PC-3 (cell line): ENCODE measurements at regions of chr15 and their contacts with region 1.

Region 1: DNA sequence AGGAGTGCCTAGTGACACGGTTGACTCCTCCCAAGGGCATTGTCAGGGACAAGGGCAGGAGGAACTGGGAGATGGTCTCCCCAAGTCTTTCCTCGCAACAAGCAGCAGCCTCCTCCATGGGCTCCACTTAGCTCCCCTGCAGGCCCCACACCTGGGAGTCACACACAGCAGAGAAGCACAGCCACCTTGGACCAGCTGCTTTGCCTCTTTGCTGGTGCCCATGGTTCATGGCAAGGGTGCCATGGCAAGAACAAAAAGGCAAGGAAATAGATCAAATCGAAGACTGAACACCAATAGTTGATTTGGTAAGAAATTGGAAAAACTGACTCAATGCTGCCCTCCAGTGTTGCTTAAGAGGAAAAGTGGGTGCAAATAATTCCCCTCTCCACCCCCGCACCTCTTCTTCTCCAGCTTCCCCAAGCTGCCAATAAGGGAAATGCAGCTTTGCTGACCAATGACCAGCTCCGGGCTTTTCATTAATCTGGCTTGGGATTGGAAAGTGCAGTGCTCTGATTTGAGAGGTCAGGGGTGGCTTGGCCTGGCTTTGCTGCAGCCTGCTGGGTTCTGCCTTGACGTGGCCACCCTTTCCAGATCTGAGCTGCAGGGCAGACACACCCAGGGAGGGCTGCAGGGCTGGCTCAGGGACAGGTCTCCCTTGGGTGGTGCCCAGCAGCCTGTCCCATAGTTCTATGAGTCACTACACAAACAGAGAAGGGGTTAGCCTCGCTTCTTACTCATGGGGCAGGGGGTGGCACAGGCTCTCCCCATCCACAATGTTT is 162.0 kb downstream of the KLF13 start:
- DNase-seq: peak; percentile 83
- ATAC-seq: peak; percentile 91
- H3K4me3 ChIP-seq: no peak overlapping the region
- H3K27ac ChIP-seq: peak overlapping the region; percentile 67
- H3K4me1 ChIP-seq: peaks cover 24% of the 10 kb centered on the region
- H3K27me3 ChIP-seq: no peaks in the 10 kb centered on the region
- CTCF ChIP-seq: peak; percentile 93

Region 2: DNA sequence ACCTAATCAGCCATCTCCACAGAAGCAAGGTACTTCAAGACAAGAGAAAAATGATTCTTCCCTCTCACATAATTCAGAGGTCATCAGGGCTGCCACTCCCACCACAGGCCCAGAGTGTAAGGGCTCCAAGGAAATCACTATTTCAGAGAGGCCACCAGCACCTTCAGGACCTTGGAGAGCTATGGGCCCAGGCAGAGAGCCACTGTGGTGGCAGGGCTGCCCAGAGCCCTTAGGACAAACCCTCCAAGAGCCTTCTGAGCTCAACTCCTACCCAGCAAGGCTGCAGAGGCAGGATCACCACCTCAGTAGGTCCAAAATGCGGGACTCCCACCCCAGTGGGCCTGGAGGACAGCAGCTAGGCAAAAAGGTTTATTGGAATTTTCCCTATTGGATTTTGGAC is 602.8 kb before region 1 on chr15:
- CTCF ChIA-PET with region 1: no interaction called
- POLR2A ChIA-PET with region 1: no interaction called
- intact Hi-C with region 1: loop called (anchors 5 kb)
- DNase-seq: peak; percentile 48
- ATAC-seq: 0 out of 2 replicates have a peak, but pooled peaks have one; percentile 37
- H3K4me3 ChIP-seq: no peak overlapping the region
- H3K27ac ChIP-seq: no peak overlapping the region
- H3K4me1 ChIP-seq: no peaks in the 10 kb centered on the region
- H3K27me3 ChIP-seq: no peaks in the 10 kb centered on the region
- CTCF ChIP-seq: no peak

Region 3: GRCh38 chr15:31200735-31201151 is 287.9 kb before region 1 on chr15:
- CTCF ChIA-PET with region 1: interaction called, 10 read pairs
- POLR2A ChIA-PET with region 1: no interaction called
- intact Hi-C with region 1: loop called (anchors 1 kb)
- DNase-seq: peak; percentile 66
- ATAC-seq: peak; percentile 90
- H3K4me3 ChIP-seq: no peak overlapping the region
- H3K27ac ChIP-seq: no peak overlapping the region
- H3K4me1 ChIP-seq: no peaks in the 10 kb centered on the region
- H3K27me3 ChIP-seq: peaks cover 26% of the 10 kb centered on the region
- CTCF ChIP-seq: peak; percentile 56

Region 4: GRCh38 chr15:31215490-31216214 is 273.0 kb before region 1 on chr15:
- CTCF ChIA-PET with region 1: interaction called, 3 read pairs
- POLR2A ChIA-PET with region 1: no interaction called
- intact Hi-C with region 1: loop called (anchors 1 kb)
- DNase-seq: peak; percentile 62
- ATAC-seq: peak; percentile 79
- H3K4me3 ChIP-seq: peak overlapping the region; percentile 67
- H3K27ac ChIP-seq: no peak overlapping the region
- H3K4me1 ChIP-seq: peaks cover 11% of the 10 kb centered on the region; the same call in 1 of the 2 replicates
- H3K27me3 ChIP-seq: no peaks in the 10 kb centered on the region
- CTCF ChIP-seq: peak; percentile 75

Region 5: GRCh38 chr15:31387479-31388118 is 101.0 kb before region 1 on chr15:
- CTCF ChIA-PET with region 1: no interaction called
- POLR2A ChIA-PET with region 1: no interaction called
- intact Hi-C with region 1: loop called (anchors 2 kb)
- DNase-seq: peak; percentile 70
- ATAC-seq: peak; percentile 74
- H3K4me3 ChIP-seq: no peak overlapping the region
- H3K27ac ChIP-seq: peak overlapping the region; percentile 64
- H3K4me1 ChIP-seq: peaks cover 24% of the 10 kb centered on the region
- H3K27me3 ChIP-seq: peaks cover 3% of the 10 kb centered on the region; the same call in 1 of the 2 replicates
- CTCF ChIP-seq: no peak

Region 6: GRCh38 chr15:31435261-31435911 is 53.2 kb before region 1 on chr15:
- CTCF ChIA-PET with region 1: interaction called, 9 read pairs
- POLR2A ChIA-PET with region 1: no interaction called
- intact Hi-C with region 1: loop called (anchors 1 kb)
- DNase-seq: peak; percentile 65
- ATAC-seq: peak; percentile 83
- H3K4me3 ChIP-seq: peak overlapping the region; percentile 21; the same call in 1 of the 2 replicates
- H3K27ac ChIP-seq: no peak overlapping the region
- H3K4me1 ChIP-seq: peaks cover 15% of the 10 kb centered on the region
- H3K27me3 ChIP-seq: no peaks in the 10 kb centered on the region
- CTCF ChIP-seq: peak; percentile 85